ENCODE measurements at regions of chr17 and their contacts with region 1.

Region 1: GRCh38 chr17:47615766-47616424 is 33.8 kb upstream of the KPNB1 start:
- DNase-seq: peak in 1 of 2 donors; percentile 78
- ATAC-seq: peak in 2 of 3 donors; percentile 59 to 67
- H3K4me3 ChIP-seq: no peak overlapping the region
- H3K4me3 Mint-ChIP-seq: no peak overlapping the region
- H3K27ac ChIP-seq: no peak overlapping the region
- H3K27ac Mint-ChIP-seq: no peak overlapping the region
- H3K4me1 ChIP-seq: no peaks in the 10 kb centered on the region
- H3K4me1 Mint-ChIP-seq: peaks cover 0 to 4% of the 10 kb centered on the region in 2 donors
- H3K27me3 ChIP-seq: no peaks in the 10 kb centered on the region
- H3K27me3 Mint-ChIP-seq: no peaks in the 10 kb centered on the region
- CTCF ChIP-seq: peak; percentile 82

Region 2: GRCh38 chr17:46940621-46941404 is 675.1 kb before region 1 on chr17:
- intact Hi-C with region 1: loop called (anchors 10 kb)
- DNase-seq: peak; percentile 43 to 78
- ATAC-seq: peak; percentile 75 to 77 (median 76)
- H3K4me3 ChIP-seq: no peak overlapping the region
- H3K4me3 Mint-ChIP-seq: no peak overlapping the region
- H3K27ac ChIP-seq: no peak overlapping the region
- H3K27ac Mint-ChIP-seq: peak overlapping the region; percentile 33 to 36
- H3K4me1 ChIP-seq: peaks cover 32% of the 10 kb centered on the region
- H3K4me1 Mint-ChIP-seq: peaks cover 22 to 27% of the 10 kb centered on the region in 2 donors
- H3K27me3 ChIP-seq: no peaks in the 10 kb centered on the region
- H3K27me3 Mint-ChIP-seq: no peaks in the 10 kb centered on the region
- CTCF ChIP-seq: peak; percentile 58

Region 3: GRCh38 chr17:47229535-47230443 is 386.1 kb before region 1 on chr17:
- intact Hi-C with region 1: loop called (anchors 2 kb)
- DNase-seq: peak; percentile 47 to 88
- ATAC-seq: peak; percentile 86 to 99 (median 91)
- H3K4me3 ChIP-seq: no peak overlapping the region
- H3K4me3 Mint-ChIP-seq: peak overlapping the region; percentile 60
- H3K27ac ChIP-seq: no peak overlapping the region
- H3K27ac Mint-ChIP-seq: peak overlapping the region in 1 of 2 donors; percentile 19
- H3K4me1 ChIP-seq: peaks cover 9% of the 10 kb centered on the region
- H3K4me1 Mint-ChIP-seq: peaks cover 11 to 17% of the 10 kb centered on the region in 2 donors
- H3K27me3 ChIP-seq: no peaks in the 10 kb centered on the region
- H3K27me3 Mint-ChIP-seq: peaks cover 10 to 11% of the 10 kb centered on the region in 2 donors
- CTCF ChIP-seq: peak; percentile 93

Region 4: DNA sequence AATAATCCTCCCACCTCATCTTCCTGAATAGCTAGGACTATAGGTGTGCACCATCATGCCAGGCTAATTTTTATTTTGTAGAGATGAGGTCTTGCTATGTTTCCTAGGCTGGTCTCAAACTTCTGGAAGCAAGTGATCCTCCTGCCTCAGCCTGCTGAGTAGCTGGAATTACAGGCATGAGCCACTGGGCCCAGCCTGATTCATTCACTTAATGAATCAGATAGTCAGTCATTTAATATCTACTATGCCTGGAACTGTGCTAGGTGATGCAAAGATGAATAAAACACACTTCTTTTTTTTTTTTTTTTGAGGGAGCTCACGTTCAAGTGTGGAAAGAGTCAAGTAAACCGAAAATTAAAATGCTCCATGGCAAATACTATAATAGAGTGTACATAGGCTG is 252.7 kb before region 1 on chr17:
- intact Hi-C with region 1: loop called (anchors 1 kb)
- DNase-seq: no peak
- ATAC-seq: no peak
- H3K4me3 ChIP-seq: no peak overlapping the region
- H3K4me3 Mint-ChIP-seq: no peak overlapping the region
- H3K27ac ChIP-seq: no peak overlapping the region
- H3K27ac Mint-ChIP-seq: no peak overlapping the region
- H3K4me1 ChIP-seq: no peaks in the 10 kb centered on the region
- H3K4me1 Mint-ChIP-seq: no peaks in the 10 kb centered on the region
- H3K27me3 ChIP-seq: no peaks in the 10 kb centered on the region
- H3K27me3 Mint-ChIP-seq: peaks cover 3 to 19% of the 10 kb centered on the region in 2 donors
- CTCF ChIP-seq: no peak

Region 5: DNA sequence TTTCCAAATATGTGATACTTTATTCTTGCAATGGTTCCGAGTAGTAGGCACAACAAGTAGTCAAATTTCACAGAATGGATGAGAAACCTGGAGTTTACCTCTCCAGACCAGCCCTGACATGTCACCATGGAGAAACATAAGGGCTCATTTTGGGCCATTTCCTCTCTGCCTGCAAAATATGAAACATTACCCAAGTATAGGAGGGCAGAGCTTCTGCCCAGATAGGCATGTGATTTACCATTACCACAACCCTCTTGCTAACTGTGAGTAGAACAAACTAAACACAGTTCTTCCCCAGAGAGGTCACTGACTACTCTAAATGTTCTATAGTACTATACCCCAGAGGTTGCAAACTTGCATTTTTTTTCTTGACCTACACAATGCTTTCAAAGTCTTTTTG is 18.1 kb after region 1 on chr17:
- intact Hi-C with region 1: no loop called
- DNase-seq: no peak
- ATAC-seq: no peak
- H3K4me3 ChIP-seq: no peak overlapping the region
- H3K4me3 Mint-ChIP-seq: no peak overlapping the region
- H3K27ac ChIP-seq: no peak overlapping the region
- H3K27ac Mint-ChIP-seq: peak overlapping the region; percentile 55 to 79
- H3K4me1 ChIP-seq: peaks cover 24% of the 10 kb centered on the region
- H3K4me1 Mint-ChIP-seq: peaks cover 20 to 26% of the 10 kb centered on the region in 2 donors
- H3K27me3 ChIP-seq: no peaks in the 10 kb centered on the region
- H3K27me3 Mint-ChIP-seq: no peaks in the 10 kb centered on the region
- CTCF ChIP-seq: no peak